ENCODE measurements at regions of chr14 and their contacts with region 1.

Region 1: GRCh38 chr14:91078095-91078737 is 17.8 kb upstream of the RPS6KA5 start:
- DNase-seq: peak; percentile 91
- H3K4me3 Mint-ChIP-seq: peak overlapping the region; percentile 45
- H3K27ac Mint-ChIP-seq: peak overlapping the region; percentile 61
- H3K4me1 Mint-ChIP-seq: peaks cover 36% of the 10 kb centered on the region
- H3K27me3 Mint-ChIP-seq: no peaks in the 10 kb centered on the region

Region 2: DNA sequence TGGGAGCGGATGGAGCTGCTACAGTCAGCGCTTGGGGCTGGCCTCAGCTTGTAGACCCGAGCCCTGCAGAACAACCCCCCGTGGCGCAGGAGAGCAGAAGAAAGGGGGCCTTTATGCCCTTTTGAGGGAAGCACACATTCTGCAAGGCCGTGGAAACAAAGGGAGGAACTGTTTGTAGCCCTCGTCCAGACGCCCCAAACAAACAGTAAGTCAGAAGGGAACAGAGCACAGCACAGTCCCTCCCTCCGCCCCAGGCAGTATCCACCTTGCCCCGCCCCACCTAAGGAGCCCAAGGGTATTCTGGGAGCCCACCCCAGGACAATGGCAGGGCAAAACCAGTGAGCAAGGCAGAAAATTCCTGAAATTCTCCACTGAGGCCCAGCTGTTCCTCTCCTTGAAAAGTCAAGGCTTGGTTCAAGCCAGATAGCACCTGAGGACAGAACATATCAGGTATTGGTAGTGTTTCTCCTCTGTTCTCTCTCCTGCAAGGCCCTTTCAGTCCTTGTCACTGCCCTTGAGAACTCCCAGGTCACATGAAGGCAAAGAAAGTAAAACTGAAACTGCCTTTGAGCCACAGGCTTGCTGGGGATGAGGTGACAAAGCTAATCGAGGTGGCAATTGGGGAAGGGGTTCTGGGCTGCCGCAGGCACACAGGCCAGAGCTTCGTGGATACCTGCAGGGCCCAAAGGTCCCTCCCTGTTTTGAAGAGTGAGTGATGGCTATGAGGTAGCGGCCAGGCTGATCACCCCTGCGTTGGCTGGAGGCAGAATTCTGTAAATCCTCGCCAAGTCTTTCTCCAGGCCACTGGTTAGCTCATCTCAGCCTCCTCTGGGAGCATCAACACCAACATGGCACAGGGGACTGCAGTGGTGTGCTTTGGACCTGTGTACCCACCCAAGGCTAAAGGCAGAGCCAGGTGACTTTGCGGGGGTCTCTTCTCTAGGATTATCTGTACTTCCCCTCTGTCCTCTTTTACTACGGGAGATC is 36.2 kb after region 1 on chr14:
- intact Hi-C with region 1: loop called (anchors 1 kb)
- DNase-seq: peak; percentile 93
- H3K4me3 Mint-ChIP-seq: peak overlapping the region; percentile 93
- H3K27ac Mint-ChIP-seq: peak overlapping the region; percentile 97
- H3K4me1 Mint-ChIP-seq: peaks cover 61% of the 10 kb centered on the region
- H3K27me3 Mint-ChIP-seq: no peaks in the 10 kb centered on the region

Measured in activated CD4-positive, alpha-beta T cell treated with anti-CD3 and anti-CD28 coated beads, Interleukin-2, amount 10 ng/mL, durations not matched to agents 24 days and 14 days (primary cell).